Posterior cingulate gyrus (tissue), 11 donors: ENCODE measurements at regions of chr15 and their contacts with region 1.

Region 1: DNA sequence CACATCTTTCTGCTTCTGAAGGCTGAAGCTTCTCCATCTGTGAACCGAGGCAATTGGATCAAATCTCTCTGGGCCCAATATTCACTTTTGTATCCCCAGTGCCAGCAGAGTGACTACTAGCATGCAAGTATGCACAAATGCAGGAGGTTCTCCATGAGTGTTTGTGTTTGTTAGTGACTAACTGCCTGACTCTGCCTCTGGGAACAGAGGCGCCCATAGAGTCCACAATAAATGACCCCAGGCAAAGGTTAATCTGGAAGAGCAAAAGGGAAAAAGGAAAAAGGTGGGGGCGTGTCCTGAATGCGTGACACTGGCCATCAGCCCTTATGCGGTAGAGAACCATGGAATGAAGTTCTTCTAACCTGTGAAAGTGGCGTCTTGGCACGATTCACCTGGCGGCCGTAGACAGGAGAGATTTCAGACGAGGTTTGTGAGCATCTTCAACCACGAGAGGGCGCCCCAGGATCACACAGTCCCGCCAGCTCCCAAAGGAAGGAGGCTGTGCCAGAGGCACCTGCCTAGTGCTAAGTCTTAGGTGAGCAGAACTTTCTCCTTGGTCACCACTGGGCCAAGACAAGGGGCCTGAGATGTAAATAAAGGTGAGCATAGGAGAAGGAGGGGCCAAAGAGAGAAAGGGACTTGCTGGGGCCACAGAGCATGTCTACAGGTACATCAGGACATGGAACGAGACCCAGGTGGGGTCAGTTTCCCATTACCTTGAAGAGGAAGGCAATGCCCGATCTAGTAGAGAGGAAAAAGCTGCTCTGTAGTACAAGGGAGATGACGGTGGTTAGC is 44.2 kb downstream of the RBPMS2 start:
- DNase-seq: peak; percentile 68 to 97 (median 88)

Region 2: GRCh38 chr15:64398575-64398974 is 332.6 kb before region 1 on chr15:
- intact Hi-C with region 1: no loop called
- DNase-seq: no peak

Region 3: GRCh38 chr15:64681424-64682024 is 49.7 kb before region 1 on chr15:
- intact Hi-C with region 1: loop called (anchors 1 kb)
- DNase-seq: peak in 4 of 10 donors; percentile 25 to 49 (median 44)

Region 4: DNA sequence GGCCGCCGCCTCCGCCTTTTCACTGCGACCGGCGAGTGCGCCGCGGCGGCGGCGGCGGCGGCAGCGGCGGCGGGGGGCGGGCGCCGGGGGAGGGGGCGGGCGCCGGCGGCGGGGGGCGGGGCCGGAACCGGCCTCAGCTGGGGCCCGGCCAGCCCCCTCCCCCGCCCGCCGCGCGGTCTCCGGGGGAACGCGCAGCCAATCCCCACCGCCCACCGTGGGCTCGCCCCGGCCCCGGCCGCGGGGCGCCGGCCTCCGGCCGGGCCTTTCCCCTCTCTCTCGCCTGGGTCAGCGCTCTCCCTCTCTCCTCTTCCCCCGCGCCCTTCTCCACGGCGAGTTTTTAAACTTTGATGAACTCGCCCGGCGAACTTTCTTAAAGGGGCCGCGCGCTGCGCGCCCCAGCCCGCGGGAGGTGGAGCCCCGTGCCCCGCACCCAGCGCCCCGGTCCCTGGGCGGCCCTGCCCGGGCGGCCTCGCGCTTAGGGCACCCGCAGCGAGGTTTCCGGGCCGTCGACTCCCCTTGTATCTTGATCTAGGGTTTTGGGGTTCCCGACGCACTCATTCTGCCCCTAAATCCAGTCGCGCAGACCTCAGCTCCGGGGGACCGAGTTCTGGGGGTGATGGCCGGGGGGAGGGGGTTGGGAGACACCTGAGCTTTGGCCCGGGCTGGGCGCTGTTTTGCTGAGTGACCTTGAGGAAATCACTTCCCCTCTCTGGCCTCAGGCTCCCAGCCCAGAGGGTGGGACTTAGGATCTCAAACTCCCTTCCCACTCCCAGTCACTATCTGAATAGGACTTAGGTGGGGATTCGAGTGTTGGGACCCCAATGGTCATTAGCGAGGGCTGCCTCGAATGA is 44.6 kb after region 1 on chr15 and contains the start of gene RBPMS2:
- intact Hi-C with region 1: no loop called
- DNase-seq: no peak

Region 5: DNA sequence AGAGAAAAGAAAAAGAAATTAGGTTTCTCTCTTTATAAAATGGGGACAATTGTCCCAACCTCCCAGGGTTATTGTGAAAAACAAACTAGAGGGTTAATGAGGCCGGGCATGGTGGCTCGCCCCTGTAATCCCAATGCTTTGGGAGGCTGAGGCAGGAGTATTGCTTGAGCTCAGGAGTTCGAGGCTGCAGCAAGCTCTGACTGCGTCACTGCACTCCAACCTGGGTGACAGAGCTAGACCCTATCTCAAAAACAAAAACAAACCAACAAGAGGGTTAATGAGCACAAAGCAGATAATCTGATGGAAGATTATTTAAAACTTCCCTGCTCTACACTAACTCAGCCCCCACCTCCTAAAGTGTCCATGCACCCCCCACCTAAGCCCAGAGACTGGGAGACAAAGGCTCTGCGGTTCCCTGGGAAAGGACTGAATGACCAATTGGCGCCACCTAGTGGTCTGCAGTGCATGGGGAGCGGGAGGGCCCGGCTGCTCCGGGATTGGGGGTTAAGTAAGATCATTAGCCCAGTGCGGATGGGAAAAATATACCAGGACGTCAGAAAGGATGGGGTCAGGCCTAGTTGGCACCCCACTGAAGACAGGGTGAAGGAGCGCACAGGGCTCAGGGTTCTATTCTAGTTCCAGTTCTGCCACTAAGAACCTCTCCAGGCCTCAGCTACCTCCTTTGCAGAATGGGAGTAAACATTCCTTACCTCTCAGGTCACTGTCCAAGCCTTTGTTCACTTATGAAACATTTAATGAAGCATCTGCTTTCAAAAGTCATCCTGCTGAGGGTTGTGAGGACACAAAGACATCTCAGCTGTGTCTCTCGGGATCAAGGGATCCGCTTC is 78.7 kb after region 1 on chr15:
- intact Hi-C with region 1: loop called (anchors 1 kb)
- DNase-seq: peak; percentile 43 to 96 (median 86)

Region 6: GRCh38 chr15:64905119-64905831 is 174.1 kb after region 1 on chr15:
- intact Hi-C with region 1: loop called (anchors 5 kb)
- DNase-seq: peak; percentile 47 to 97 (median 81)